ENCODE measurements at regions of chr19 and their contacts with region 1.

Region 1: DNA sequence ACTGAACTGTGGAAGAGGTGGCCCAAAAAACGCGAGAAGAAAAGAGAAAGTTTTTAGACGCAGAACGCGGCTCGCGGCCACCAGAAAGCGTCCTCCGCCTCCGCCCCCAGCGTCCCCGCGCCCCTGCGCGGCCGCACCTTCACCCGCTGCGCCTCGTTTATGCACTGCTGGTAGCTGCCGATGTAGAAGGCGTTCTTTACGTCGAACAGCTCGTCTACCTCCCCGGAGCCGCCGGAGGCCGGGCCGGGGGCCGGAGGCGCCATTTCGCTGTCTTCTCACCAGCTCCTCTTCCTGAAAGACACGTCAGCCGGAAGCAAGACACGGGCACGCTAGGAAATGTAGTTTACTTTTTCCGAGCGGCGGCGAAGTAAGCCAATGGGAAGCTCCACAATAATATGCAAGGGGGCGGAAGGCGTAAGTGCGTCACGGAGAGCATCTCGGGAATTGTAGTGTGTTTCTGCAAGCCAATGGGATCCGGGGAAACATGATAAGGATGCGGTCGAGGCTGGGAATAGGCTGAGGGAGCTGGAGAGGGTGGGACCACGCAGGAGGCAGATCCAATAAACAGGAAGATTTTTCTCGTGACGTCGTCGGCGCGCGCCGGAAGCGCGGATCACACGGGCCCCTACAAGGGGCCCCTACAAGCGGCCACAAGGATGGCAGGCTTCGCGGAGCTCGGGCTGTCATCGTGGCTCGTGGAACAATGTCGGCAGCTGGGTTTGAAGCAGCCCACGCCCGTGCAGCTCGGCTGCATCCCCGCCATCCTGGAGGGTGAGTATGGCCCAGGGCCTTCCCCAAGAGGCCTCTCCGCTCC is at the starts of genes COPE and DDX49:
- DNase-seq: peak; percentile 99
- H3K4me3 ChIP-seq: peak within 1 kb of the TSS; percentile 100
- H3K27ac ChIP-seq: peak within 1 kb of the TSS; percentile 93
- H3K27me3 ChIP-seq: no peaks in the 10 kb centered on the region
- CTCF ChIP-seq: no peak
- polyA plus RNA-seq, gene COPE: 170 and 217 TPM in 2 replicates
- polyA plus RNA-seq, gene DDX49: 30.7 and 40.9 TPM in 2 replicates

Region 2: DNA sequence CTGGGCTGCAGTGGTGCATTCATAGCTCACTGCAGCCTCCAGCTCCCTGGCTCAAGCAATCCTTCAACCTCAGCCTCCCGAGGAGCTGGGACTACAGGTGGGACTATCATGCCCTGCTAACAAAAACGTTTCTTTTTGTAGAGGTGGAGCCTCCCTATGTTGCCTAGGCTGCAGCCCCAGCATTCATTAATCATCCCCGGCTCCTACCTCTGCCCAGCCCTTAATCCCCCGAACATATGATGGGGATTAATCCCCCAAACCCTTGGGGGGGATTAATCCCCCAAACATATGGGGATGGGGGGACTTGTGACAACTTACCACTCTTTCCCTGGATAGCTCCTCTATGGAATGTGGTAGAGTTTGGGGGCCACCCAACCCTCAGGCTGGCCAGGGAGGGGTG is 68.2 kb after region 1 on chr19:
- CTCF ChIA-PET with region 1: interaction called, 10 read pairs
- POLR2A ChIA-PET with region 1: interaction called, 15 read pairs
- DNase-seq: no peak
- H3K4me3 ChIP-seq: no peak overlapping the region
- H3K27ac ChIP-seq: no peak overlapping the region
- H3K27me3 ChIP-seq: peaks cover 10% of the 10 kb centered on the region
- CTCF ChIP-seq: no peak

Region 3: DNA sequence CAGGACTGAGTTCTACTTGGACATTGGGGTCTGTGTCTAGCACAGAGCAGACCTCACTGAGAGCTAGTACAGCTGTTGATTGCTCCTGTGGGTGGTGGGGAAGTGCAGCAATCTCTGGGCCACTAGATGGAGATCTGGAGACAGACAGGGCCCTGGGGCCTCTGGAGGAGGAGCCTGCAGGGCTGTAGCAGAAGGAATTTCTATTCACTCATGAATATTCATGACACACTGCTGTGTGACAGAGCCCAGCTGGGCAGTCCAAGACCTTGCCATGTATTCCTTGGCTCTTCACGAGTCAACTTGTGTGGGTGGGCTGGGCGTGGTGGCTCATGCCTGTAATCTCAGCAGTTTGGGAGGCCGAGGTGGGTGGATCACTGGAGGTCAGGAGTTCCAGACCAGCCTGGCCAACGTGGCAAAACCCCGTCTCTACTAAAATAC is 76.5 kb after region 1 on chr19:
- CTCF ChIA-PET with region 1: no interaction called
- POLR2A ChIA-PET with region 1: interaction called, 10 read pairs
- DNase-seq: peak; percentile 91
- H3K4me3 ChIP-seq: no peak overlapping the region
- H3K27ac ChIP-seq: peak overlapping the region; percentile 82
- H3K27me3 ChIP-seq: no peaks in the 10 kb centered on the region
- CTCF ChIP-seq: peak; percentile 94

Region 4: GRCh38 chr19:19138169-19138981 is 219.1 kb after region 1 on chr19 and contains the start of gene TMEM161A:
- CTCF ChIA-PET with region 1: no interaction called
- POLR2A ChIA-PET with region 1: no interaction called
- DNase-seq: peak; percentile 99
- H3K4me3 ChIP-seq: peak within 1 kb of the TSS; percentile 94
- H3K27ac ChIP-seq: peak within 1 kb of the TSS; percentile 39
- H3K27me3 ChIP-seq: peaks cover 4% of the 10 kb centered on the region
- CTCF ChIP-seq: no peak
- polyA plus RNA-seq, gene TMEM161A: 16.0 and 21.7 TPM in 2 replicates